AG04450 (cell line): ENCODE measurements at regions of chr2 and their contacts with region 1.

Region 1: GRCh38 chr2:217650716-217651360 is 352.0 kb downstream of the TNS1 start:
- DNase-seq: peak; percentile 21
- H3K4me3 ChIP-seq: no peak overlapping the region
- H3K27ac ChIP-seq: no peak overlapping the region
- H3K27me3 ChIP-seq: no peaks in the 10 kb centered on the region
- CTCF ChIP-seq: peak; percentile 89

Region 2: DNA sequence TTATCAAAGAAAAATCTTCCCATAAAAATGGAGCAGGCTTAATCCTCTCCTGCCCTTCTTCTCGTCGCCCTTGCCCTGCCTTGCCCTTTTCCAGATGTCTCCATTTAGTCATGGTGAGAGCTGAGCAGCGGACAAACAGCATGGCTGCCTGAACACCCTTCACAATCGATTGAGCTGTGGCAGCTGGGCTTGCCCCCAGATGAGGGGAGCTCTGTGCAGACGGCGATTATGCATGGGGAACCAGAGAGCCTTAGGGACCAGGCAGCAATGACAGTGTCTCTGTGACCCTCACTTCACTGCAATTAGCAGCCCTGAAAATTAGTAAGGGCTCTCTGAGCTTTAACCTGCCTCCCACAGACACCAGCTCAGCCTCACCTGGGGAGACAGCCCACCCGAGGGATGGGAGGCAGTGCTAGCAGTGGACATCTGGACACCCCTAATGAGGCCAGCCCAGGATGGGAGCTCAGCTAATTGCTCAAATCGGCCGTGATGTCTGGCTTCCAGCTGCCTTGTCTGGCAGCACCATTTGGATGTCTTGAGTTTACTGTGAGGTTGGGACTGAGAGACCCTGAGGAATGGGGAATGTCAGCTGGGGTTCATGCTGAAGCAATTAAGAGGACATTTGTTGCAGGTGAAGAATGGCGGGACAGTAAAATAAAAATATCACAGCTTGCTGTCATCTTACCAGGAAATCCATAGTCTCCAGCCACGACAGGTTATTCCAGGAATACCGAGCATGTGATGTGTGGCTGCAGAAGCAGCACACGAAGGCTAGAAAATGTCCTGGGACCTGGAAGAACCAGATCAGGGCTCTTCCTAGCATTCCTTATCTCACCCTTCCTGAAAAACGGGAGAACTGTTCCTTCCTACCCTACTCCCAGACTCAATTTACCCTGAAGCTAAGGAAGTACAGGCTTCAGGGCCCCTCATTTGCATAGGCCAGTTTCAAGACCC is 13.6 kb before region 1 on chr2:
- CTCF ChIA-PET with region 1: interaction called, 38 read pairs
- POLR2A ChIA-PET with region 1: no interaction called
- DNase-seq: no peak
- H3K4me3 ChIP-seq: no peak overlapping the region
- H3K27ac ChIP-seq: no peak overlapping the region
- H3K27me3 ChIP-seq: peaks cover 24% of the 10 kb centered on the region
- CTCF ChIP-seq: no peak

Region 3: GRCh38 chr2:217667512-217667911 is 16.7 kb after region 1 on chr2:
- CTCF ChIA-PET with region 1: interaction called, 13 read pairs
- POLR2A ChIA-PET with region 1: interaction called, 4 read pairs
- DNase-seq: no peak
- H3K4me3 ChIP-seq: no peak overlapping the region
- H3K27ac ChIP-seq: no peak overlapping the region
- H3K27me3 ChIP-seq: no peaks in the 10 kb centered on the region
- CTCF ChIP-seq: no peak

Region 4: GRCh38 chr2:217713395-217714286 is 62.8 kb after region 1 on chr2:
- CTCF ChIA-PET with region 1: interaction called, 41 read pairs
- POLR2A ChIA-PET with region 1: no interaction called
- DNase-seq: peak; percentile 54
- H3K4me3 ChIP-seq: no peak overlapping the region
- H3K27ac ChIP-seq: peak overlapping the region; percentile 31
- H3K27me3 ChIP-seq: no peaks in the 10 kb centered on the region
- CTCF ChIP-seq: peak; percentile 97